Activated naive CD4-positive, alpha-beta T cell treated with anti-CD3 and anti-CD28 coated beads for 36 hours (primary cell): ENCODE measurements at regions of chrX and their contacts with region 1.

Region 1: GRCh38 chrX:11533211-11533651 is 132.5 kb downstream of the ARHGAP6 start:
- DNase-seq: no peak
- H3K4me3 Mint-ChIP-seq: no peak overlapping the region
- H3K27ac Mint-ChIP-seq: no peak overlapping the region
- H3K4me1 Mint-ChIP-seq: no peaks in the 10 kb centered on the region
- H3K27me3 Mint-ChIP-seq: no peaks in the 10 kb centered on the region

Region 2: GRCh38 chrX:11724122-11725017 is 191.1 kb after region 1 on chrX:
- CTCF ChIA-PET with region 1: interaction called, 6 read pairs
- intact Hi-C with region 1: loop called (anchors 1 kb)
- DNase-seq: peak; percentile 19
- H3K4me3 Mint-ChIP-seq: no peak overlapping the region
- H3K27ac Mint-ChIP-seq: no peak overlapping the region
- H3K4me1 Mint-ChIP-seq: no peaks in the 10 kb centered on the region
- H3K27me3 Mint-ChIP-seq: no peaks in the 10 kb centered on the region

Region 3: DNA sequence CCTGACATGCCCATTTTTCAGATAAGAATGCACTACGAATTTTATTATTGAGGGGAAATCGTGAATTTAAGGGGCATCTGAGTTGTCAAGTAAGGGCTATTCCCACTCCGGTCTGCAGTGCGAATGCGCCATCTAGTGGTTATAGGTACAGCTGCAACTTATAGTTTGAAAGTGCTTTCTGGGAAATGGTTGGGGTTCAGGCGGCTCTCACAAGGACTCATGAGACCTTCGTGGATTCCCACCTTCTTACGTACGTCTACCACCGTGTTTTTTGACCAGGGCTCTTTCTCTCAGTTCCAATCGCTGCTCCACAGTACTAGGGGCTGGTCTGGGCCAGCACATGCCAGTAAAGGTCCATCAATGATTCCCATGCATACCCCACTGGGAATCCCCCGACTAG is 237.1 kb after region 1 on chrX:
- CTCF ChIA-PET with region 1: interaction called, 4 read pairs
- intact Hi-C with region 1: loop called (anchors 1 kb)
- DNase-seq: peak; percentile 64
- H3K4me3 Mint-ChIP-seq: peak overlapping the region; percentile 47
- H3K27ac Mint-ChIP-seq: peak overlapping the region; percentile 92
- H3K4me1 Mint-ChIP-seq: peaks cover 41% of the 10 kb centered on the region
- H3K27me3 Mint-ChIP-seq: no peaks in the 10 kb centered on the region

Region 4: GRCh38 chrX:12567857-12568256 is 1034.6 kb after region 1 on chrX:
- CTCF ChIA-PET with region 1: no interaction called
- intact Hi-C with region 1: loop called (anchors 1 kb)
- DNase-seq: no peak
- H3K4me3 Mint-ChIP-seq: no peak overlapping the region
- H3K27ac Mint-ChIP-seq: no peak overlapping the region
- H3K4me1 Mint-ChIP-seq: no peaks in the 10 kb centered on the region
- H3K27me3 Mint-ChIP-seq: no peaks in the 10 kb centered on the region

Region 5: DNA sequence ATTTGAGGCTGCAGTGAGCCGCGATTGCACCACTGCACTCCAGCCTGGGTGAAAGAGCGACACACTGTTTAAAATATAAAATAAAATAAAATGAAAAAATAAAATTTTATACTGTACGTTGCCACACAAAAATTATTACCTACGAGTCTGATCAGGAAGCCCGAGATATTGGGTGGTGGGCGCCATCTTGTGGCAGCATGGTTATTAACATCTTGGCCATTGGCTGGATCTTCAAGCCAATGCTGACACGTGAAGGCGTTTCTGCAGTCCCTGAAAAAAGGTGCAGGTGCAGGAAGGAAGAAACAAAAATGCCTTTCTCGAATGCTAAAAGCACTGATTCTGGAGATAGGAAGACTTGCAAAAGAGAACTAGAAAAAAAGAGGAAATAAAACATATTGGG is 1368.3 kb after region 1 on chrX:
- CTCF ChIA-PET with region 1: no interaction called
- intact Hi-C with region 1: loop called (anchors 10 kb)
- DNase-seq: peak; percentile 85
- H3K4me3 Mint-ChIP-seq: no peak overlapping the region
- H3K27ac Mint-ChIP-seq: no peak overlapping the region
- H3K4me1 Mint-ChIP-seq: peaks cover 8% of the 10 kb centered on the region
- H3K27me3 Mint-ChIP-seq: no peaks in the 10 kb centered on the region